Activated B cell treated with CpG ODN at 0.5 μM for 24 hours (primary cell): ENCODE measurements at regions of chr1 and their contacts with region 1.

Region 1: DNA sequence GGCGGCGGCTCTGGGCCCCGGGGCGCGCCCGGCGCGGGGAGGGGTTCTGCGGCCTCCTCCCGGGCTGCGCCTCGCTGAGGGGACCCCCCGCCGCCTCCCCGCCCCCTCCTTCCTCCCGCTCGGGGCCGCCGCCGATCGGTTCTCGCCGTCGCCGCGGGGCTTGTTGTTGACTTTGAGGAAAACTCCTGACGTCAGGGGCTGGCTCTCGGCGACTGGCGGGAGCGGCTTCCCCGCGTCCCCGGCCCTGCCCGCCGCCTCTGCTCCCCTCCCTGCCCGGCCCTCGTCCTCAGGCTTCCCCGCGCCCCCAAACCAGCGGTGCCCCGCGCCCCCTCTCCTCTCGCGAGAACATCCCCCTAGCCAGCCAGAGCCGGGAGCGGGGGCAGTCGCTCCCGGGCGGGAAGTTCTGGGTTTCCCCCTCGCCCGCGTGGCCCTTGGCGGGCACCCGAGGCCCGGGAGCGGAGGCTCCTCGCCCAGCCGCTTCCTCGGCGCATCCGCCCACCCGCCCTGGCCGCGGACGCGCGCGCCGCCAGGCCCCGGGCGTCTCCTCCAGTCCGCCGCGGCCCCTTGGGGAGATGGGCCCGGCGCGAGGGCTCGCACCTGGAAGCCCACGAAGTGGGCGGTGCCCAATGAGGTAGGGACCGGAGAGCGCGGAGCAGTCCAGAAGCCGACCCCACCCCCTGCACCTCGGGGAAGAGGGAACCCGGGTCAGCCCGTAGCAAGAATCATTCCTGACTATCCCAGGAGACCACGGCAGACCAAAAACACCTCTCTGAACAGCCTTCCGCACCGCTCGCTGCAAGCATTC is 611 bp upstream of the AKT3 start:
- DNase-seq: peak; percentile 76
- ATAC-seq: peak; percentile 47
- H3K4me3 Mint-ChIP-seq: peak overlapping the region; percentile 93
- H3K27ac Mint-ChIP-seq: peak overlapping the region; percentile 90
- H3K4me1 Mint-ChIP-seq: peaks cover 33% of the 10 kb centered on the region
- H3K27me3 Mint-ChIP-seq: peaks cover 2% of the 10 kb centered on the region
- CTCF ChIP-seq: no peak

Region 2: DNA sequence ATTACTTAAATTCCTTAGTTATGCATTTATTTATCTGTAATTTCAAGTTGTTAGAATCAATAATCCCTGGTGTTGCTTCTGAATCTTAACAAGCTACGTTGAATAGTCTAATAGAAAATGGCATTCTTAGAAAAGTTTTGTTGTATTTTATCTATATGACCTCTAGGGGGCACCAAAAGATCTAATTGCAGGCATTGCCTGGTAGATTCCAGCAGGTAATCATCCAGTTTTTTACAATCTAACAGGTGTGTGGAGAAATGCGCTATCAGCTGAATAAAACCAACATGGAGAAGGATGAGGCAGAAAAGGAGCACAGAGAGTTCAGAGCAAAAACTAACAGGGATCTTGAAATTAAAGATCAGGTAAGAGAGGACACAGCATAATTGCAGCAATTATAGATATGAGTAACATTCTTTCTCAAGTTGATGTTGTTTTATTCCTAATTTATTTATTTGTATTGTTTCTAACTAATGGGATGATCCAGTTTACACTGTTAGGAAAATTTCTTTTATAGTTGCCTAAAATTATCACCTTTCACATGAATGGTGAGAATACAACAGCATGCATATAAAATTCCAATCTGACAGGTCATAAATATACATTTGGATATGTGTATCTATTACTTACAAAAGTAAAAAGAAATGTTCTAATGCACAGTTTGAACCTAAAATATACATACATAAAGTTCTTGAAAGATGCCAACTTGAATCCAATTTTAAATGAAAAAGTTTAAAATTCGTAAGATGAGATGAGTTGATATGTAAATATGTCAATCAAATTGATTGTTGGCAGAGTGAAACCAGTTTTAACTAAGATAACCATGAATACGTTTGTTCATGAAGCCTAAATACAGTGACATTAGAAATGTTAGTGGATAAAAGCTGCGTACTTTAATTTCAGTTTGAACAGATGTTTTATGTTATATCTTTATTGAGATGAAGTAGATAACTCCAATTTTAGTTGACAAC is 506.4 kb before region 1 on chr1:
- CTCF ChIA-PET with region 1: no interaction called
- POLR2A ChIA-PET with region 1: no interaction called
- intact Hi-C with region 1: loop called (anchors 5 kb)
- DNase-seq: no peak
- ATAC-seq: no peak
- H3K4me3 Mint-ChIP-seq: no peak overlapping the region
- H3K27ac Mint-ChIP-seq: no peak overlapping the region
- H3K4me1 Mint-ChIP-seq: no peaks in the 10 kb centered on the region
- H3K27me3 Mint-ChIP-seq: no peaks in the 10 kb centered on the region
- CTCF ChIP-seq: peak; percentile 88

Region 3: DNA sequence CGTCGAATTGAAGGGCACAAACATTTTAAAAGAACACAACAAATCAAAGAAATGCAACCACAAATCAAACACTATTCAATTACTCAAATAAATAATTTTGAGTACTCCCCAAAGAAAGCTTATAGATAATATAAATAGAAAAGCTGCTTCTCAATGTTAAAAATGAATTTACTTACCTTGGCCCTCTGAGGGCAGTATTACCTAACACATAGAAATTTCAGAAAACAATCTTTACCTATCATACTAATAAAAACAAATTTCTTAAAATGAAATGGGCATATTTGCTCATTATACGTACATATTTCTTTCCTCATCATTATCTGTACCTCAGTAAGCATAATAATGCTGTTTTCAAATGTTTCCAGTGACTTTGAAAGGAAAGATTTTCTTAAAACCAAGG is 142.4 kb before region 1 on chr1:
- CTCF ChIA-PET with region 1: no interaction called
- POLR2A ChIA-PET with region 1: no interaction called
- intact Hi-C with region 1: loop called (anchors 5 kb)
- DNase-seq: no peak
- ATAC-seq: no peak
- H3K4me3 Mint-ChIP-seq: no peak overlapping the region
- H3K27ac Mint-ChIP-seq: no peak overlapping the region
- H3K4me1 Mint-ChIP-seq: peaks cover 8% of the 10 kb centered on the region
- H3K27me3 Mint-ChIP-seq: no peaks in the 10 kb centered on the region
- CTCF ChIP-seq: no peak

Region 4: GRCh38 chr1:243727503-243728203 is 123.0 kb before region 1 on chr1:
- CTCF ChIA-PET with region 1: no interaction called
- POLR2A ChIA-PET with region 1: no interaction called
- intact Hi-C with region 1: loop called (anchors 1 kb)
- DNase-seq: peak; percentile 20
- ATAC-seq: peak; percentile 86
- H3K4me3 Mint-ChIP-seq: peak overlapping the region; percentile 39
- H3K27ac Mint-ChIP-seq: peak overlapping the region; percentile 76
- H3K4me1 Mint-ChIP-seq: peaks cover 55% of the 10 kb centered on the region
- H3K27me3 Mint-ChIP-seq: no peaks in the 10 kb centered on the region
- CTCF ChIP-seq: no peak

Region 5: GRCh38 chr1:243982451-243983018 is 131.9 kb after region 1 on chr1:
- CTCF ChIA-PET with region 1: no interaction called
- POLR2A ChIA-PET with region 1: no interaction called
- intact Hi-C with region 1: no loop called
- DNase-seq: no peak
- ATAC-seq: no peak
- H3K4me3 Mint-ChIP-seq: no peak overlapping the region
- H3K27ac Mint-ChIP-seq: no peak overlapping the region
- H3K4me1 Mint-ChIP-seq: no peaks in the 10 kb centered on the region
- H3K27me3 Mint-ChIP-seq: peaks cover 6% of the 10 kb centered on the region
- CTCF ChIP-seq: no peak

Region 6: GRCh38 chr1:244074559-244075171 is 224.0 kb after region 1 on chr1:
- CTCF ChIA-PET with region 1: no interaction called
- POLR2A ChIA-PET with region 1: interaction called, 3 read pairs
- intact Hi-C with region 1: loop called (anchors 2 kb)
- DNase-seq: peak; percentile 34
- ATAC-seq: peak; percentile 69
- H3K4me3 Mint-ChIP-seq: peak overlapping the region; percentile 83
- H3K27ac Mint-ChIP-seq: peak overlapping the region; percentile 88
- H3K4me1 Mint-ChIP-seq: peaks cover 50% of the 10 kb centered on the region
- H3K27me3 Mint-ChIP-seq: no peaks in the 10 kb centered on the region
- CTCF ChIP-seq: no peak

Region 7: DNA sequence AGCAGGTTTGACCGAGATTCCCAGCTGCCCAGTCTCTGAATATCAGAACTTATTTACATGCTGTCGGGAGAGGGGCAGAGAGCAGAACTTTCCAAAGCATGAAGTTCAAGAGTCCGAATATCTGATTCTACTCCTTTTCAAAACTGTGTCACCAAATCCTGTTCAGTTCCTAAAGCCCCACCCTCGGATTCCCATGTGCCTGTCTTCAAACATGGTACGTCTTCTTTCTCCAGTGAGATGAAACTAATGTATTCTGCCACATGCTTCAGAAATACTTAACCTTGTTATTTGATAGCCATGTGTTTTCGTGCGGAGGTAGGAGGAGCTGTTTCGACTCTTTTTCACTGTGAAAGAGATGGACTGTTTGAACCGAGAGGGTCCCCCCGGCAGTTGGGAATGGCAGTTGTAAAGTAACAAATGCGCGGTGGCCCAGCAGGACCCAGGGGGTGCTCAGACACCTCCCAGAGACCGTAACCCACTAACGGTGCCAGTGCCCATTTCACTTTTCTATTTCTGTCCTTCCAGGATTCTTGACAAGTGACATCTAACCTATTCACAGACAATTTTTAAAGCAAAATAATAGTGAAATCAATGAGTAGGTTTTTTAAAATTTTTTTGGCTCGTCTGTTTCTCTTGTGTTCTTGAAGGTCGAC is 267.6 kb after region 1 on chr1:
- CTCF ChIA-PET with region 1: no interaction called
- POLR2A ChIA-PET with region 1: no interaction called
- intact Hi-C with region 1: no loop called
- DNase-seq: no peak
- ATAC-seq: no peak
- H3K4me3 Mint-ChIP-seq: no peak overlapping the region
- H3K27ac Mint-ChIP-seq: no peak overlapping the region
- H3K4me1 Mint-ChIP-seq: no peaks in the 10 kb centered on the region
- H3K27me3 Mint-ChIP-seq: peaks cover 13% of the 10 kb centered on the region
- CTCF ChIP-seq: no peak

Region 8: GRCh38 chr1:244214009-244214967 is 363.6 kb after region 1 on chr1:
- CTCF ChIA-PET with region 1: no interaction called
- POLR2A ChIA-PET with region 1: no interaction called
- intact Hi-C with region 1: no loop called
- DNase-seq: no peak
- ATAC-seq: no peak
- H3K4me3 Mint-ChIP-seq: no peak overlapping the region
- H3K27ac Mint-ChIP-seq: no peak overlapping the region
- H3K4me1 Mint-ChIP-seq: peaks cover 8% of the 10 kb centered on the region
- H3K27me3 Mint-ChIP-seq: peaks cover 8% of the 10 kb centered on the region
- CTCF ChIP-seq: no peak

Region 9: DNA sequence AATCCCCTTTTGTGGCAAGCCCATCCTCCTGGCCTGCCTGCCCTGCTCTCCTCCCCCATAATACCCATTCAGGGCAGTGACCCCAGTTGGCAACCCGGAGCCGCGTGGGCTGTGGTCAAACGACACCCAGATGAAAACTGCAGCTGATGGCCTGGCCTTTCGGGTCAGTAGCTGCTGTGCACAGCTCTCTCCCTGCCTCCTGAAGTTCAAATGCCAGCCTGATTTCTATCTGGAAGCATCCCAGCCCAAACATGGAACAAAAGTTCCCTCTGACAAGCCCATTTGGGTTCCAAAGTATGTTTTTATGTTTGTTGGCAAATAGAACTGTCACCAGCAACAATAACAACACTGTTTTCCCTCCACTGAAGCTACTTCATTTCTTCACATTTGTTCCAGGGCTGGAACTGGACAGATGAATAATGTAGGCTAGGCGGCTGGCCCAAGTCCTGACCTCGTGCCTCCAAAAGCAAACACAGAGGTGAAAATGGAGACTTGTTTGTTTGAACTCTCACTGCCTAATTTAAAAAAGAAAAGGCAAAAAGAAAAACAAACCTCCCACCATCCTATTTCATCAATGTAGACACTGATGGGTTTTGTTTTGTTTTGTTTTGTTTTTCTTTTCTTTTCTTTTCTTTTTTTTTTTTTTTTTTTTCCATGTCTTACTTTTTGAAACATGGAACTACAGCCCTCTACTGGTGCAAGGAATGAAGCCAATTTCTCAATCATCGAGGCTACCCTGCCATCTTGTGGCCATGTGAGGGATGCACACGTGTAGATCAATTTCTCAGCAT is 422.0 kb after region 1 on chr1:
- CTCF ChIA-PET with region 1: no interaction called
- POLR2A ChIA-PET with region 1: no interaction called
- intact Hi-C with region 1: loop called (anchors 2 kb)
- DNase-seq: peak; percentile 50
- ATAC-seq: peak; percentile 96
- H3K4me3 Mint-ChIP-seq: no peak overlapping the region
- H3K27ac Mint-ChIP-seq: no peak overlapping the region
- H3K4me1 Mint-ChIP-seq: peaks cover 21% of the 10 kb centered on the region
- H3K27me3 Mint-ChIP-seq: no peaks in the 10 kb centered on the region
- CTCF ChIP-seq: peak; percentile 92

Region 10: DNA sequence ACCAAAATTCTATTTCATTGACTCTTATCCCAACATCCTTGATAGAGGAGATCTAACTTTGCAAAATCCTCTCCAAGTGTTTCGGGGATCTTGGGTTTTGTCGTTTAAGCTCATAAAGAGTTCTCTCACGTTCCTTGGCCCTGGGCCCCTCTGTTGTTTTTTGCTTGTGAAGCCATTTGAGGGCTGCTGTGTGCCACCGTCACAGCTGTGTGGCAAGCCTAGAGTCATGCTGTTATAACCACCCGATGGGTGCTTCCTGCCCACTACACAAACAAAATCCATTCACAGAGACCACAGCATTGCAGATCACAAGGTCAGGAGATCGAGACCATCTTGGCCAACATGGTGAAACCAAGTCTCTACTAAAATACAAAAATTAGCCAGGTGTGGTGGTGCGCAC is 447.0 kb after region 1 on chr1:
- CTCF ChIA-PET with region 1: no interaction called
- POLR2A ChIA-PET with region 1: no interaction called
- intact Hi-C with region 1: loop called (anchors 2 kb)
- DNase-seq: no peak
- ATAC-seq: no peak
- H3K4me3 Mint-ChIP-seq: no peak overlapping the region
- H3K27ac Mint-ChIP-seq: peak overlapping the region; percentile 19
- H3K4me1 Mint-ChIP-seq: peaks cover 24% of the 10 kb centered on the region
- H3K27me3 Mint-ChIP-seq: no peaks in the 10 kb centered on the region
- CTCF ChIP-seq: no peak